A673 (cell line): ENCODE measurements at regions of chr1 and their contacts with region 1.

Region 1: GRCh38 chr1:62260688-62261087 is 58.5 kb downstream of the KANK4 start:
- DNase-seq: no peak
- H3K4me3 ChIP-seq: no peak overlapping the region
- H3K27ac ChIP-seq: no peak overlapping the region
- H3K4me1 ChIP-seq: no peaks in the 10 kb centered on the region
- H3K27me3 ChIP-seq: no peaks in the 10 kb centered on the region
- CTCF ChIP-seq: no peak

Region 2: GRCh38 chr1:61950418-61950817 is 310.3 kb before region 1 on chr1:
- CTCF ChIA-PET with region 1: no interaction called
- POLR2A ChIA-PET with region 1: no interaction called
- intact Hi-C with region 1: no loop called
- DNase-seq: peak; percentile 54
- H3K4me3 ChIP-seq: no peak overlapping the region
- H3K27ac ChIP-seq: no peak overlapping the region
- H3K4me1 ChIP-seq: peaks cover 38% of the 10 kb centered on the region
- H3K27me3 ChIP-seq: no peaks in the 10 kb centered on the region
- CTCF ChIP-seq: peak; percentile 66

Region 3: DNA sequence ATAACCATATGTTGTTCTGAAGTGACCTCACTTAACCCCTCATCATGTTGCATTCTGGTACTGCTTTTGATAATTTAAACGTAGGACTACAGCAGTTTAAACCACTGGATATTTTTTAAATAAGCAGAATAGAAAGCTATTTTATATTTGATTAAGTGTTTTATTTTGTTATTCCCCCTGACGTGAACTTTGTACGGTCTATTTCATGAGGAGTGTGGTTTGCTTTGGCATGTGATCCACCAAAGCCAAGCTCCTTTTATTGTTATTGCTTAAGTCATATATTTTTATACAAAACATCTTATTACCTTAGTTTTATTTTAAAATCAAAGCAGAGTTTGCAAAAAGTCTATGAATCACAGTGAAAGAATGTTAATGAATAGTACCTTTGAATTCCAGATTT is 167.4 kb before region 1 on chr1:
- CTCF ChIA-PET with region 1: no interaction called
- POLR2A ChIA-PET with region 1: no interaction called
- intact Hi-C with region 1: no loop called
- DNase-seq: no peak
- H3K4me3 ChIP-seq: no peak overlapping the region
- H3K27ac ChIP-seq: no peak overlapping the region
- H3K4me1 ChIP-seq: no peaks in the 10 kb centered on the region
- H3K27me3 ChIP-seq: no peaks in the 10 kb centered on the region
- CTCF ChIP-seq: no peak

Region 4: GRCh38 chr1:62318756-62319544 is 58.3 kb after region 1 on chr1 and contains the start of gene KANK4:
- CTCF ChIA-PET with region 1: no interaction called
- POLR2A ChIA-PET with region 1: no interaction called
- intact Hi-C with region 1: no loop called
- DNase-seq: peak; percentile 17
- H3K4me3 ChIP-seq: peak within 1 kb of the TSS; percentile 39
- H3K27ac ChIP-seq: no peak within 1 kb of the TSS
- H3K4me1 ChIP-seq: peaks cover 5% of the 10 kb centered on the region
- H3K27me3 ChIP-seq: peaks cover 49% of the 10 kb centered on the region
- CTCF ChIP-seq: no peak
- total RNA-seq, gene KANK4: 0.13 and 0.24 TPM in 2 replicates

Region 5: DNA sequence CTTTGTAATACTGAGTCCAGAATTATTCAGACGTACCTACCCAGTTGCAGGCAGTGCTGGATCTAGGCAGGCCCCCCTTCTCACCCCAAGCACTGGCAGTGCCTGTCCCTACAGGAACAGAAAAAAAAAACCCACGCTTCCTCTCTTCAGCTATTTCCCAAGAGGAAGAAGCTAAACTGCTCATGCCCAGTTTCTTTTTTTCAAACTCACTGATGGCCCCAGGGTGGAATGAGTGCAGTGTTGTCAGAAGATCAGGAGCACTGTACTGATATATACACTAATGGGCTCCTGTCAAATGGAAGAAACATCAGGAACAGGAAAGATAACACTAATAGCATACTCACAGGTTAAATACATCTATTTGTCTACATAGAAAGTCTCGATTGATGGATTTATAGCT is 455.7 kb after region 1 on chr1:
- CTCF ChIA-PET with region 1: no interaction called
- POLR2A ChIA-PET with region 1: no interaction called
- intact Hi-C with region 1: no loop called
- DNase-seq: no peak
- H3K4me3 ChIP-seq: no peak overlapping the region
- H3K27ac ChIP-seq: no peak overlapping the region
- H3K4me1 ChIP-seq: peaks cover 12% of the 10 kb centered on the region
- H3K27me3 ChIP-seq: no peaks in the 10 kb centered on the region
- CTCF ChIP-seq: no peak

Region 6: DNA sequence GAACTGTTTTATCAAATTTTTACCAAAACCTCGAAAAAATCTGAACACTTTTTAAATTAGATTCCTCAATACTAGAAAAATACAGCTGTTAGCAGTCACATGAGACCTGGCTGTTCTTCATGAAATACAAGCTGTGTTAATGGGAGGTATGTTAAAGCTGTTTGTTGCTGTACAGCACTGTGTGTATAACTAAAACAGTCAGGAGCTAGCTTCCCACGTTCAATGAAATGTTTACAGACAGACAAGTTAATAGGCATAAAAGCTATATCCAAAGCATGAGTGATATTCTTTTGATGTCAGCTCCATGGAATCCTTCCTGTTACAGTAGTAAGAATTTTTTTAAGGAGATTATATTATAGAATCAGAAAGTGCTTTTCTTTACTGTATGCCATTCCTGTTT is 838.5 kb after region 1 on chr1:
- CTCF ChIA-PET with region 1: no interaction called
- POLR2A ChIA-PET with region 1: interaction called, 10 read pairs
- intact Hi-C with region 1: no loop called
- DNase-seq: no peak
- H3K4me3 ChIP-seq: no peak overlapping the region
- H3K27ac ChIP-seq: no peak overlapping the region
- H3K4me1 ChIP-seq: no peaks in the 10 kb centered on the region
- H3K27me3 ChIP-seq: no peaks in the 10 kb centered on the region
- CTCF ChIP-seq: no peak